ENCODE measurements at regions of chr2 and their contacts with region 1.

Region 1: GRCh38 chr2:209565896-209566582 is 142.2 kb downstream of the MAP2 start:
- DNase-seq: no peak
- ATAC-seq: no peak
- H3K4me3 ChIP-seq: no peak overlapping the region
- H3K27ac ChIP-seq: no peak overlapping the region
- H3K4me1 ChIP-seq: no peaks in the 10 kb centered on the region
- H3K27me3 ChIP-seq: no peaks in the 10 kb centered on the region
- CTCF ChIP-seq: no peak

Region 2: GRCh38 chr2:209340522-209340921 is 225.5 kb before region 1 on chr2:
- intact Hi-C with region 1: loop called in 1 of 10 experiments (anchors 5 kb)
- DNase-seq: no peak
- ATAC-seq: no peak
- H3K4me3 ChIP-seq: no peak overlapping the region
- H3K27ac ChIP-seq: no peak overlapping the region
- H3K4me1 ChIP-seq: no peaks in the 10 kb centered on the region
- H3K27me3 ChIP-seq: peaks cover 0 to 11% (median 0%) of the 10 kb centered on the region in 7 donors
- CTCF ChIP-seq: no peak

Region 3: GRCh38 chr2:209671020-209671680 is 105.1 kb after region 1 on chr2:
- intact Hi-C with region 1: no loop called
- DNase-seq: no peak
- ATAC-seq: no peak
- H3K4me3 ChIP-seq: no peak overlapping the region
- H3K27ac ChIP-seq: no peak overlapping the region
- H3K4me1 ChIP-seq: no peaks in the 10 kb centered on the region
- H3K27me3 ChIP-seq: no peaks in the 10 kb centered on the region
- CTCF ChIP-seq: no peak

Region 4: GRCh38 chr2:209960676-209961630 is 394.9 kb after region 1 on chr2:
- intact Hi-C with region 1: loop called in 1 of 10 experiments (anchors 10 kb)
- DNase-seq: peak in 1 of 2 donors; percentile 21
- ATAC-seq: peak in 6 of 8 donors; percentile 49 to 80 (median 60)
- H3K4me3 ChIP-seq: no peak overlapping the region
- H3K27ac ChIP-seq: no peak overlapping the region
- H3K4me1 ChIP-seq: no peaks in the 10 kb centered on the region
- H3K27me3 ChIP-seq: no peaks in the 10 kb centered on the region
- CTCF ChIP-seq: peak; percentile 32 to 79 (median 68)